ENCODE measurements at regions of chr10 and their contacts with region 1.

Region 1: GRCh38 chr10:35409094-35409582 is 72.8 kb downstream of the CCNY start:
- DNase-seq: no peak
- H3K4me3 ChIP-seq: no peak overlapping the region
- H3K27ac ChIP-seq: no peak overlapping the region
- H3K4me1 ChIP-seq: peaks cover 16% of the 10 kb centered on the region
- H3K27me3 ChIP-seq: no peaks in the 10 kb centered on the region
- CTCF ChIP-seq: no peak
- POLR2A ChIP-seq: no peak

Region 2: DNA sequence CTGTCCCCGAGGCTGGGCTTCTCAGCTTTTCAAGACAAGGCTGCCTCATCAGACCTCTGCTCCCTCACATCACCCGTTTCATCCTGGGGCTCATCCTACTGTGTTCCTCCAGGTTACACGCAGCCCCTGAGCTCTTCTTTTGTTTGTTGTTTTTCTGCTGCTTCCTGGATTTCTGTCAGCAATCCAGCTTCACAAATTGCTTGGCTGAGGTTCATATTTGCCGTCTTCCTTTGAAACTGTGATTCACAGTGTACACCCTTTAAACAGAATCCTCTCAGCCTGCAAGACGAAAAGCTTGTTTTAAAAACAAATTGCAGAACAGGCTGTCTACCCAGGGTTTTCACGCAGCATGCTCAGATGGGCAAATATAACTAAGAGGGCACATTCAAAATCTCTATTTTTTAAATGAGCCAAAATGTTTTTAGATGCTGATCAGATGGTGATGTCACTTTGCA is 555.0 kb before region 1 on chr10:
- intact Hi-C with region 1: no loop called
- DNase-seq: peak; percentile 47
- H3K4me3 ChIP-seq: no peak overlapping the region
- H3K27ac ChIP-seq: peak overlapping the region in 1 of 2 donors; percentile 0
- H3K4me1 ChIP-seq: peaks cover 2% of the 10 kb centered on the region
- H3K27me3 ChIP-seq: no peaks in the 10 kb centered on the region
- CTCF ChIP-seq: no peak
- POLR2A ChIP-seq: no peak

Region 3: DNA sequence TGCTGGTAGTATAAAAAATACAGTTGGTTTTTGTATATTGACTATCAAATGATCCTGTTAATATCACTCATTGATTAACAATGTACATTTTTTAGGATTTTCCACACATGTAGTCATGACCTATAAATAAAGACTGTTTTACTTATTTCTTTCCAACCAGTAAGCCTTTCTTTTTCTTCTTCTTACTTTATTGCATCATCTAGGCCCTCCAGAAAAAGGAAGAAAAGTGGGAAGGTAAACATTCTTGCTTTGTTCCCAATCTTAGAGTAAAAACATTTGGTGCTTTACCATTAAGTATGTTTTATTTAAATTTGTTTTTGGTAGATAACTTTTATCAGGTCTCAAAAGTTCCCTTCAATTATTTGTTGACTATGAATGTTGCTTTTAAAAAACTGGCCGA is 119.9 kb before region 1 on chr10:
- intact Hi-C with region 1: no loop called
- DNase-seq: no peak
- H3K4me3 ChIP-seq: no peak overlapping the region
- H3K27ac ChIP-seq: no peak overlapping the region
- H3K4me1 ChIP-seq: no peaks in the 10 kb centered on the region
- H3K27me3 ChIP-seq: no peaks in the 10 kb centered on the region
- CTCF ChIP-seq: no peak
- POLR2A ChIP-seq: no peak

Region 4: DNA sequence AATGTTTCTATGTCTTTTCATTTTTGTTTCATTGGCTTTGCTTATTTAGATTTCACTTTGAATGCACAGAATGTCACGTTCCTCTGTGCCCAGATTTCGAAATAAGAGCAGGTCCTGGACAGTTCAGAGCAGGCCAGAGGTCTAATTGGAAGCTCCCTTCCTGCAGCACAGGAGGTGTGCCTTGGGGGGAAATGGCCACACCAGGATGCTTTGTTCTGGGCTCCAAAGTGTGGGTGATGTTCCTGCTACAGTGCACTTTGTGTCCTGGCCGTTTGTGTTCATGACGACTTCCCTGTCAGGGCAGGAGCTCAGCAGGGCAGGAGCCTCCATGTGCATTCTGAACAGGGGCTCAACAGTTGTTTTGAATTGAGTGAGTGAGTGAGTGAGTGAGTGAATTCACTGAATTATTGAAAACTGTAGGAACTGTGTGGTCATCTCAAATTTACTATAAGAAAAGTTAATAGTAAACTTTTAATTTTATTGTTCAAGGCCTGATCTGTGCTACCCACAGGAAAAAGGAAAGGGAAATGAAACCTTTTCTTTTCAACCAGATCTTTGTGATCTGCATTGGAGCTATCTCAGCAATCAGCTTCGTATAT is 86.5 kb after region 1 on chr10:
- intact Hi-C with region 1: loop called (anchors 10 kb)
- DNase-seq: no peak
- H3K4me3 ChIP-seq: no peak overlapping the region
- H3K27ac ChIP-seq: no peak overlapping the region
- H3K4me1 ChIP-seq: no peaks in the 10 kb centered on the region
- H3K27me3 ChIP-seq: no peaks in the 10 kb centered on the region
- CTCF ChIP-seq: no peak
- POLR2A ChIP-seq: no peak